Cardiac septum (tissue), 1 donor: ENCODE measurements at regions of chr2 and their contacts with region 1.

Region 1: DNA sequence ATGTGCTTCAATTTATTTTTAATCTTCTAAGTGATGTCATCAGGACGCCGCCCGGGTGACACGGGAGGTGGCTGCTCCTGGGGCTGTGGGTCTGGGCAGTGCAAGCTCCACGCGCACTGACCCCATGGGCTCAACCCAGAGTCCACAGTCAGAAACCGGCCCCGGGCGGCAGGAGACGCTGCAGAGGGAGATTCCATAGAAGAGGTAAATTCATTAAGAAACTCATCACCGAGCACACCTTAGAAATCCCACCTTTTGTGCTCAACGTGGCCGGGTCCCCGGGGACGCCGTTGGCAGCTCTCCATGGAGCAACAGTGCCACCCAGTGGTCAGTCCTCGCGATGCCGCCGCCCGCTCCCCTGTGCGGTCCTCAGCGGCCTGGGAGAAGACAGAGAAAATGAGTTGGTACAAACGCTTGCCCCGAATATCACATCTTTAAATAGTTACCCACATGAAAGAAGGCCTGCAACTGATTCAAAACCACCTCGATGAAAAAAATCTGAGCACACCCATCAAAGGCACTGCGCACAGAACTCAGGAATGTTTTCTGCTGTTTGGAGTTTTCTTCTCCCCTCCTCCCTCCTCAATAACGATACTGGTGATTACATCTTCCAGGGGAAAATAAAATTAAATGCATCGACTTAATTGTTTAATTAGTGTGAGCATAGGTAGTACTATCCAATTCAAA is 92.6 kb downstream of the CMPK2 start:
- DNase-seq: no peak

Region 2: DNA sequence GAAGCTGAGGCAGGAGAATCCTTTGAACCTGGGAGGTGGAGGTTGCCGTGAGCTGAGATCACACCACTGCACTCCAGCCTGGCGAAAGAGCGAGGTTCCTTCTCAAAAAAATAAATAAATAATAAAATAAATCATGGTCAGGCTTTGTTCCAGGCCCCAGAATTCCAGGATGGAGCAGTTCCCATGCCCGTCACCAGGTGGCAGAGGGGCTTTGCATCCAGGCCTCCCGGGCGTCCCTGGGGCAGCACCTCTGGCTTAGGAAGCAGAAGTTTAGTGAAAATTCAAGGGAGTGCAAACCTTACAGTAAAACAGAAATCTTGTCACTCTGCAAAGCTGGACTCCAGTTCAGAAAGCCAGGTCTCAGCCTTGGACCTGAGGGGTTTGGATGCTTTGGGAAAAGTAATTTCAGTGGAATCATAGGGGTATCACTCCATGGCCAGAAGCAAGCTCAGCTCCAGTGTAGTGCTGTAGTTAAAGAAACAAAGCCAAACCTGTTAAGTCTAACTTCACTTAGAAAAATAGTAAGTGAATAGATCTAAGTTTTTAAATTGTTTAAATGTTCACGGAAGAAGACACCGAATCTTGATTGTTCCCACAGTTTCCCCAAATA is 420.1 kb before region 1 on chr2:
- intact Hi-C with region 1: loop called (anchors 2 kb)
- DNase-seq: no peak

Region 3: GRCh38 chr2:7552825-7553570 is 779.8 kb after region 1 on chr2:
- intact Hi-C with region 1: no loop called
- DNase-seq: no peak